Activated T-helper 1 cell treated with anti-CD3 and anti-CD28 coated beads, Interleukin-12 subunit alpha, Interleukin-12 subunit beta, Interleukin-2, Interleukin-4 antibody, amounts not matched to agents 30 ng/mL and 10 ng/mL and 1 ng/mL, durations not matched to agents 14 hours and 24 hours and 36 hours (primary cell): ENCODE measurements at regions of chr13 and their contacts with region 1.

Region 1: GRCh38 chr13:77480066-77480465 is 55.4 kb upstream of the SCEL start:
- DNase-seq: no peak
- H3K4me3 Mint-ChIP-seq: no peak overlapping the region
- H3K27ac Mint-ChIP-seq: no peak overlapping the region
- H3K4me1 Mint-ChIP-seq: peaks cover 17% of the 10 kb centered on the region
- H3K27me3 Mint-ChIP-seq: peaks cover 6% of the 10 kb centered on the region

Region 2: GRCh38 chr13:77184455-77184854 is 295.6 kb before region 1 on chr13:
- intact Hi-C with region 1: loop called (anchors 1 kb)
- DNase-seq: no peak
- H3K4me3 Mint-ChIP-seq: no peak overlapping the region
- H3K27ac Mint-ChIP-seq: peak overlapping the region; percentile 49
- H3K4me1 Mint-ChIP-seq: peaks cover 23% of the 10 kb centered on the region
- H3K27me3 Mint-ChIP-seq: no peaks in the 10 kb centered on the region

Region 3: DNA sequence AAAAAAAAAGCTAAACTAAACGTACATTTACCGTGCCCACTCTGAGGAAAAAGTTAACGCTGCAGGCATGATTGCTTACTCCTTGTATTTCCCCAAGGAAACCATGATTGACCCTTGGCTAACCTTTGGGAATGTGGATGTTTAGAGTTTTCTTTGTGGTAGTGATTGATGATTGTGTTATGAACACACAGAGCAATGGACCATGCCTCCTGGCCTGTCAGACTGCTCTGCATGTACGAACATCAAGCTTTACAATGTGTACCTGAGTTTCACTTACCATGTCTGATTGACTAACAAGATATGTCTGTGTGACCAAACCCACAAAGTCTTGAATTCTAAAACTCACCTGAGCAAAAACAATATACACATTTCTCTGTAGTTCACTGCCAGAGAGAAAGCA is 188.3 kb before region 1 on chr13:
- intact Hi-C with region 1: loop called (anchors 1 kb)
- DNase-seq: no peak
- H3K4me3 Mint-ChIP-seq: no peak overlapping the region
- H3K27ac Mint-ChIP-seq: no peak overlapping the region
- H3K4me1 Mint-ChIP-seq: peaks cover 41% of the 10 kb centered on the region
- H3K27me3 Mint-ChIP-seq: no peaks in the 10 kb centered on the region

Region 4: DNA sequence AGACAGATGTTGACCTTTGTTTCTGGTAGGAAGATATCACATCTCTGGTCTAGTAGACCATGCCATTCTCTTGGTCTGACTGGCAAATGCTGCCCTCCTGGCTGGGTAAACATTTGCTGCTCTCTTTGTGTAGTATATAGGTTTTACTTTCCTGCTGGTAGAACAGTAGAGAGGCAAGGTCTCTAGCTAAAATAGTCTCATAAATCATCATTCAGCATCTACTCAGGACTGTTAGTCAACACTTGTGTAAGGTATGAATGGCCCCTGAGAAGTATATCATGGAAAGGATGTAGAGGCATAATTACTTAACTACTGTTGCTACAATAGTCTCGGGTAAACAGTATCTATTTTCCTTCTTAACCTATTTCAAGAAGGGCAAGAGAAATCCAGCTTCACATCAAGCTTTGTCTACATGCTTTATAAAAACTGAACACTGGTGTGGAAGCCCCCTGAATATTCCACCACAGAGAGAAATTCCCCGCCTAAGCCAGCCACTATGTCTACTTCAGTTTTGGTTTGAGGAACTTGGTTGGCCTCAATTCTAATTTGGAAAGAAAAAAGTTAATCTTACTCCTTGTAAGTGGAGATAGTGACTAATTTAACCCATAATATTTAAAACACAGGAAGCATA is 134.8 kb before region 1 on chr13:
- intact Hi-C with region 1: loop called (anchors 1 kb)
- DNase-seq: no peak
- H3K4me3 Mint-ChIP-seq: no peak overlapping the region
- H3K27ac Mint-ChIP-seq: peak overlapping the region; percentile 88
- H3K4me1 Mint-ChIP-seq: peaks cover 13% of the 10 kb centered on the region
- H3K27me3 Mint-ChIP-seq: peaks cover 3% of the 10 kb centered on the region

Region 5: DNA sequence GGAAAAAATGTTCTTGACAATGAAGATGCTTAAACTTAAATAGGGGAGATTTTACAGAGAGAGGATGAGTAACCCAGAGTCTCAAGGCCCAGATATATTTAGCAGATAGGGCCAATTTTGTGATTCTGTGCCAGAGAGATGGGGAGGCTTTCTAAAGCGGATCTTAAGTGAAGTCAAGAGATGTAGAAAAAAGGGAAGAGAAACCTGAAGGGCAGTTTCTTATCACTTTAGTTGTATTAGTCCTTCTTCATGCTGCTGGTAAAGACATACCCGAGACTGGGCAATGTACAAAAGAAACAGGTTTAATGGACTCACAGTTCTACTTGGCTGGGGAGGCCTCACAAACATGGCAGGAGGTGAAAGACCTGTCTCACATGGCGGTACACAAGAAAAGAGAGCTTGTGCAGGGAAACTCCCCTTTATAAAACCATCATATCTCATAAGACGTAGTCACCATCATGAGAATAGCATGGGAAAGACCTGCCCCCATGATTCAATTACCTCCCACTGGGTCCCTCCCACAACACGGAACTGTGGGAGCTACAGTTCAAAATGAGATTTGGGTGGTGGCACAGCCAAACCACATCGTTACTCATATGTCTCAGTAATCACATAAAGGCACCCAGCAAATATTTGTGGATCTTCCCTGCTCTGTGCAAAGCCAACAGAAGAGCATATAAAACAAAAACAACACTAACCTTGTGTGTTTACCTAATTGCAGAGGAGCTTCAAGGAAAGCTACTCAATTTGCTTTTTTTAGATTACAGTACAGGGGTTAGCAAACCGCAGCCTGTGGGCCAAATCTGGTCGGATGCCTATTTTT is 50.5 kb before region 1 on chr13:
- intact Hi-C with region 1: loop called (anchors 2 kb)
- DNase-seq: no peak
- H3K4me3 Mint-ChIP-seq: no peak overlapping the region
- H3K27ac Mint-ChIP-seq: peak overlapping the region; percentile 49
- H3K4me1 Mint-ChIP-seq: peaks cover 11% of the 10 kb centered on the region
- H3K27me3 Mint-ChIP-seq: no peaks in the 10 kb centered on the region

Region 6: GRCh38 chr13:77729502-77730221 is 249.6 kb after region 1 on chr13:
- intact Hi-C with region 1: loop called (anchors 5 kb)
- DNase-seq: peak; percentile 54
- H3K4me3 Mint-ChIP-seq: peak overlapping the region; percentile 59
- H3K27ac Mint-ChIP-seq: peak overlapping the region; percentile 78
- H3K4me1 Mint-ChIP-seq: peaks cover 50% of the 10 kb centered on the region
- H3K27me3 Mint-ChIP-seq: no peaks in the 10 kb centered on the region

Region 7: DNA sequence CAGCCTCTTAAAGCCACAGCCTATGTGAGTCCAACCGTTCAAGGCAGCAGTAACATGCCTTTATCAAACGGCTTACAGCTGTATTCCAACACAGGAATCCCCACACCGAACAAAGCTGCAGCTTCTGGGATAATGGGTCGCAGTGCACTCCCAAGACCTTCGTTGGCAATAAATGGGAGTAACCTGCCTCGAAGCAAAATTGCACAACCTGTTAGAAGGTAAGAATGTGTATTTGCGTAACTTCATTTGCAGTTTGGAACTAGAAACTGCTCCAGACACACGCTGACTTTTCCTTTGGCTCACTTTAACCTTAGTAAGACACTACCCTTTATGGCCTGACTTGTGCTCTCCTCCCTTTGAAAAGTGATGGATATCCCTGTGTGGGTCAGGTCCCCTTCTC is 280.8 kb after region 1 on chr13:
- intact Hi-C with region 1: no loop called
- DNase-seq: no peak
- H3K4me3 Mint-ChIP-seq: no peak overlapping the region
- H3K27ac Mint-ChIP-seq: no peak overlapping the region
- H3K4me1 Mint-ChIP-seq: no peaks in the 10 kb centered on the region
- H3K27me3 Mint-ChIP-seq: no peaks in the 10 kb centered on the region